Right ventricle myocardium inferior (tissue), 1 donor: ENCODE measurements at regions of chr1 and their contacts with region 1.

Region 1: DNA sequence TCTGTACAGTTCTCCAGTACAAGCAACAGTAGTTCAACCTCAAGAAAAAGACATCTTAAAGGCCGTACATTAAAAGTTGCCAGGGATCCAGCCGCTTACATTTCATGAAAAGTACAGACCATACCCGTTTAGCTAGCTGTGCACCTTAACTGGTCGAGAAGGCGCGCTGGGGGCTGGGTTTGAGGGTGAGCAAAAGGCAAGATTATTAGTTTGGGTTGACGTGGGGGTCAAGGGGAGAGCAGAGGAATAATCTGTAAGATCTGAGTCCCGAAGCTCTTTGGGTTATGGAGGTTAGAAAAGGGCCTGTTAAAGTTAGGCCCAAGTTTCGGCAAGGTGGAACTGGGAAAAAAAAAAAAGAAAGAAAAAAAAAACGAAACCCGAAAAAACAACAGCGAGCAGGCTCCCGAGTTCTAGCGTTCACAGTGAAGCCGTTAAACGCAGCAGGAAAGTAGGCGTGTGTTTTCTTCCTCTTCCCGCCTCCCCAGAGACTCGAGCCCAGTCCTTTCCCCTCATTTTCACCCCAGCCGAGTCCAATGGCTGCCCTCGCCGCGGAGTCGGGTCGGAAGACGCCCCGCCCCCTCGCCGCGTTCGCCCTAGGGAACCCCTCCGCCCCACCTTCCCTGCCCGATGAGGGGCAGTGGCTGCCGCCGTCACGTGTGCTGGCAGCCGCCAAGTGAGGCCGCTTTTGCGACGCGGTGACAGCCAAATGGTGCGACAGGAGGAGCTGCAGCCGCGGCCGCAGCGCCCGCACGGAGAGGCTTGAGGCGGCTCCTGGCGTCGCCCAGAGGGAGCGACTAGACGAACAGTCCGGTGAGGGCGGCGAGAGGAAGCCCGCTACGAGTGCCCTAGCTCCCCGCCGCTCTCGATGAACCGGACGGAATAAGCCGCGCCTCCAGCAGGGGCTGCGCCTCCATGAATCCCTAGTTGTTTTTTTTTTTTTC is at the start of gene PKN2:
- DNase-seq: peak; percentile 99
- ATAC-seq: peak; percentile 100
- total RNA-seq, gene PKN2: 29.7 TPM

Region 2: DNA sequence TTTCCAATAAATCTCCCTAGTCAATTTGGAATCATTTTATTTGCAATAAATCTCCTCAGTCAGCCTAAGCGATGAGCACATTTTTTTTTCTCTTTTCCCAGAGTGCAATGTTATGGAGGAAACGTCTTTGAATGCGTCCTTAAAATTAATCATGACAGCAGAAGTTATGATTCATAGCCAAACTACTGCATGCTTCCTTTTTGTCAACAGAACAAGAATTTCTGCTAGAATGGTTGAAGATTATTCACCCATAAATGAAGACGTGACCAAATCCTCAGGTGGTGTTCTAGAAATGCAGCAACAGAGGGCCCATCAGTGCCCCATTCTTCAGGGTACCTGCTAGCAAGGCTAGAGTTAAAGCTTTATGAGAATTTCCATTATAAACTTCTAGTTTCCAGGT is 407.6 kb before region 1 on chr1:
- intact Hi-C with region 1: no loop called
- DNase-seq: no peak
- ATAC-seq: no peak

Region 3: GRCh38 chr1:88708021-88708420 is 24.2 kb after region 1 on chr1:
- intact Hi-C with region 1: no loop called
- DNase-seq: no peak
- ATAC-seq: no peak

Region 4: DNA sequence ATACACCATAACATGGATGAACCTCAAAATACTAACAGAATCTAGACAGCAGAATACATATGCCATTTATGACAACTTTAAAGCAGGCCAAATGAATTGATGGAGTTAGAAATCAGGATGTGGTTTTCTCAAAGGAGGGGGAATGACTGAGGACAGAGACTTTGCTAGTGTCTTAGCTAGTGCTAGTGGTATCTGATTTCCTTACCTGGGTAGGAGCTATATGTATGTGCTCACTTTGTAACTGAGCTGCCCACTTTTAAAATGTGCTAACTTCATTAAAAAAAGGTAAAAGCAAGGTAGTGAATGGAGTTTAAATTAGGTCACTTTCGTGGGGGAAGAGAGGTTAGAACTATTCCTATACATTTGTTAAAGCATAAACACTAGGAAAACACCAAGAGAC is 204.9 kb after region 1 on chr1:
- intact Hi-C with region 1: loop called (anchors 10 kb)
- DNase-seq: no peak
- ATAC-seq: no peak

Region 5: DNA sequence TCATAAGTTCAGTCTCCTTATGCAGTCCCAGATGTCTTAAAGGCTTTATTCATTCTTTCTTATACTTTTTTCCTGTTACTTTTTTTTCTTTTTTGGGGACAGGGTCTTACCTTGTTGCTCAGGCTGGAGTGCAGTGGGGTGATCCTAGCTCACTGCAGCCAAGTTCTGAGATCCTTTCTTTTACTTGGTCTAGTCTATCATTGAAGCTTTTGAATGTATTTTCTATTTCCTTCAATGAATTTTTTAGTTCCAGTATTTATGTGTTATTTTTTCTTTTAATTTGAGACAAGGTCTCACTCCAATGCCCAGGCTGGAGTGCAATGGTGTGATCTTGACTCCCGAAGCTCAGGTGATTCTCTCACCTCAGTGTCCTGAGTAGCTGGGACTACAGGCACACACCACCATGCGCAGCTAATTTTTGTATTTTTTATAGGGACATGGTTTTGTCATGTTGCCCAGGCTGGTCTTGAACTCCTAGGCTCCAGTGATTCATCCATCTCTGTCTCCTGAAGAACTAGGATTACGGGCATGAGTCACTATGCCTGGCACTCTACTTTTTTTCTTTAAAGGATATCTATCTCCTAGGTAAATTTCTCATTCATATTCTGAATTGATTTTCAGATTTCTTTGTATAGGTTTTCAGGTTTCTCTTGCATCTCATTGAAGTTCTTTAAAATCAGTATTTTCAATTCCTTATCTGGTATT is 233.7 kb after region 1 on chr1:
- intact Hi-C with region 1: no loop called
- DNase-seq: no peak
- ATAC-seq: no peak